ENCODE measurements at regions of chr7 and their contacts with region 1.

Region 1: GRCh38 chr7:158818325-158819213 is 10.7 kb downstream of the ESYT2 start:
- DNase-seq: peak; percentile 87
- ATAC-seq: peak; percentile 74
- H3K4me3 Mint-ChIP-seq: peak overlapping the region; percentile 81
- H3K27ac Mint-ChIP-seq: peak overlapping the region; percentile 98
- H3K4me1 Mint-ChIP-seq: peaks cover 91% of the 10 kb centered on the region
- H3K27me3 Mint-ChIP-seq: no peaks in the 10 kb centered on the region
- CTCF ChIP-seq: no peak

Region 2: GRCh38 chr7:158704704-158705468 is 113.7 kb before region 1 on chr7 and contains the start of gene NCAPG2:
- CTCF ChIA-PET with region 1: no interaction called
- POLR2A ChIA-PET with region 1: interaction called, 4 read pairs
- intact Hi-C with region 1: loop called (anchors 5 kb)
- DNase-seq: peak; percentile 98
- ATAC-seq: peak; percentile 98
- H3K4me3 Mint-ChIP-seq: peak within 1 kb of the TSS; percentile 76
- H3K27ac Mint-ChIP-seq: peak within 1 kb of the TSS; percentile 89
- H3K4me1 Mint-ChIP-seq: peaks cover 35% of the 10 kb centered on the region
- H3K27me3 Mint-ChIP-seq: no peaks in the 10 kb centered on the region
- CTCF ChIP-seq: peak; percentile 26
- total RNA-seq, gene NCAPG2: 108 to 113 TPM

Region 3: GRCh38 chr7:158885624-158886023 is 67.1 kb after region 1 on chr7:
- CTCF ChIA-PET with region 1: no interaction called
- POLR2A ChIA-PET with region 1: no interaction called
- intact Hi-C with region 1: no loop called
- DNase-seq: no peak
- ATAC-seq: no peak
- H3K4me3 Mint-ChIP-seq: no peak overlapping the region
- H3K27ac Mint-ChIP-seq: no peak overlapping the region
- H3K4me1 Mint-ChIP-seq: no peaks in the 10 kb centered on the region
- H3K27me3 Mint-ChIP-seq: no peaks in the 10 kb centered on the region
- CTCF ChIP-seq: peak; percentile 45

Region 4: DNA sequence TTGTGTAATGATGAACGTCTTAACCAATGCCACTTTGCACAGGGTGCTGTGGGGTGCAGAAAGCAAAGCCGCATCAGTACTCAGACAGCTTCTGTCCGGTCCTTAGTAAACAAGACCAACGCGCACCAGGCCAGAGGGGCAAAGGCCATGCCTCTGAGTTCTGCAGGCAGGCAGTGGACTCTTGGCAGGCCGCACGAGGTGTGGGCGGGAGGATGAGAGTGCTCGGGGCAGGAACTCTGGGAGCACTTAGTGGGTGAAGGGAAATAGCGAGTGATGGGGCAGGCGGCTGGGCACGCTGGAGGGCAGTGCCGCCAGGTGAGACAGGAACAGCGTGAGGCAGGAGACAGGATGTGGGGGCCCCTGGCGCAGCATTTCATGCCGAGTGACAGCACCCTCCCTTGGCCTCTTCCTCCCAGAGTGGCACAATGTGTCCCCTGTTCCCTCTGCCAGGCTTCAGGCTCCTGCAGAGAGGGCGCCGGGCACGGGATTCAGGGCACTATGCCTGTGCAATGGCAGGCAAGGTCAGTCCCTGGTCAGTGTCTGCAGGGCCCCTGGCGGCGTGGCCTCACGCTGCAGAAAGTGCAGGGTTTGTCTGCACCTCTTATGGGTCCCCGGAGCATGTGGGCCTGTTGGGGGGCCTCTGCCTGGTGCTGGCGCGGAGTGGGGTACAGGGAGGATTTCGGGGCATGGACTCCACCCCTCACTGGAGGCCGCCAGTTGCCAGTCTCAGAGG is 265.7 kb after region 1 on chr7:
- CTCF ChIA-PET with region 1: no interaction called
- POLR2A ChIA-PET with region 1: no interaction called
- intact Hi-C with region 1: no loop called
- DNase-seq: no peak
- ATAC-seq: no peak
- H3K4me3 Mint-ChIP-seq: no peak overlapping the region
- H3K27ac Mint-ChIP-seq: no peak overlapping the region
- H3K4me1 Mint-ChIP-seq: peaks cover 2% of the 10 kb centered on the region
- H3K27me3 Mint-ChIP-seq: no peaks in the 10 kb centered on the region
- CTCF ChIP-seq: no peak

Measured in activated CD8-positive, alpha-beta T cell treated with anti-CD3 and anti-CD28 coated beads for 36 hours (primary cell).